CD14-positive monocyte (primary cell): ENCODE measurements at regions of chr19 and their contacts with region 1.

Region 1: GRCh38 chr19:7748770-7749209 is 1.5 kb upstream of the CD209 start:
- DNase-seq: peak in 2 of 3 donors; percentile 40 to 48
- H3K4me3 ChIP-seq: no peak overlapping the region
- H3K4me3 Mint-ChIP-seq: no peak overlapping the region
- H3K27ac ChIP-seq: no peak overlapping the region
- H3K27ac Mint-ChIP-seq: peak overlapping the region in 1 of 7 donors; percentile 22
- H3K4me1 ChIP-seq: peaks cover 20 to 29% of the 10 kb centered on the region in 2 donors
- H3K4me1 Mint-ChIP-seq: peaks cover 36% of the 10 kb centered on the region
- H3K27me3 ChIP-seq: no peaks in the 10 kb centered on the region
- H3K27me3 Mint-ChIP-seq: peaks cover 2 to 6% (median 6%) of the 10 kb centered on the region in 3 donors
- CTCF ChIP-seq: peak; percentile 25

Region 2: GRCh38 chr19:7705387-7706187 is 43.2 kb before region 1 on chr19:
- intact Hi-C with region 1: loop called in 1 of 2 experiments (anchors 5 kb)
- DNase-seq: peak; percentile 91 to 95 (median 94)
- H3K4me3 ChIP-seq: peak overlapping the region in 1 of 3 experiments; percentile 67
- H3K4me3 Mint-ChIP-seq: peak overlapping the region; percentile 70 to 85
- H3K27ac ChIP-seq: peak overlapping the region; percentile 92 to 98
- H3K27ac Mint-ChIP-seq: peak overlapping the region; percentile 98 to 100 (median 99)
- H3K4me1 ChIP-seq: peaks cover 84 to 88% of the 10 kb centered on the region in 2 donors
- H3K4me1 Mint-ChIP-seq: peaks cover 79% of the 10 kb centered on the region
- H3K27me3 ChIP-seq: no peaks in the 10 kb centered on the region
- H3K27me3 Mint-ChIP-seq: peaks cover 0 to 6% (median 4%) of the 10 kb centered on the region in 3 donors
- CTCF ChIP-seq: no peak

Region 3: DNA sequence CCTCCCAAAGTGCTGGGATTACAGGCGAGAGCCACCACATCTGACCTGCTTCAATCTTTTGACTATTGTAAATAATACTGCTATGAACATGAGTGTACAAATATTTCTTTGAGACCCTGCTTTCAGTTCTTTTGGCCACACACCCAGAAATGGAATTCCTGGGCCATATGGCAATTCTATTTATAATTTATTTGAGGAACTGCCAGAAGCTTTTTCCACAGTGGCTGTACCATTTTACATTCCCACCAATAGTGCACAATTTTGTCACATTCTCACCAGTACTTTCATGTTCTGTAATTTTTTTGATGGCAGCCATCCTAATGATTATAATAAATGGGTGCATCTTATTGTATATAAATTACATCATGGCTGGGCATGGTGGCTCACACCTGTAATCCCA is 33.1 kb before region 1 on chr19:
- intact Hi-C with region 1: no loop called
- DNase-seq: no peak
- H3K4me3 ChIP-seq: no peak overlapping the region
- H3K4me3 Mint-ChIP-seq: no peak overlapping the region
- H3K27ac ChIP-seq: peak overlapping the region in 1 of 2 donors; percentile 83
- H3K27ac Mint-ChIP-seq: peak overlapping the region; percentile 95 to 99 (median 98)
- H3K4me1 ChIP-seq: peaks cover 45 to 49% of the 10 kb centered on the region in 2 donors
- H3K4me1 Mint-ChIP-seq: peaks cover 40% of the 10 kb centered on the region
- H3K27me3 ChIP-seq: no peaks in the 10 kb centered on the region
- H3K27me3 Mint-ChIP-seq: peaks cover 0 to 4% (median 0%) of the 10 kb centered on the region in 3 donors
- CTCF ChIP-seq: no peak

Region 4: GRCh38 chr19:7783991-7784421 is 35.2 kb after region 1 on chr19:
- intact Hi-C with region 1: loop called in 1 of 2 experiments (anchors 5 kb)
- DNase-seq: peak; percentile 75 to 89 (median 85)
- H3K4me3 ChIP-seq: peak overlapping the region in 1 of 3 experiments; percentile 0
- H3K4me3 Mint-ChIP-seq: peak overlapping the region in 1 of 2 donors; percentile 70
- H3K27ac ChIP-seq: peak overlapping the region; percentile 2 to 19
- H3K27ac Mint-ChIP-seq: peak overlapping the region; percentile 69 to 92 (median 75)
- H3K4me1 ChIP-seq: peaks cover 34 to 44% of the 10 kb centered on the region in 2 donors
- H3K4me1 Mint-ChIP-seq: peaks cover 29% of the 10 kb centered on the region
- H3K27me3 ChIP-seq: peaks cover 9 to 26% of the 10 kb centered on the region in 2 donors
- H3K27me3 Mint-ChIP-seq: peaks cover 19 to 28% (median 20%) of the 10 kb centered on the region in 3 donors
- CTCF ChIP-seq: no peak

Region 5: DNA sequence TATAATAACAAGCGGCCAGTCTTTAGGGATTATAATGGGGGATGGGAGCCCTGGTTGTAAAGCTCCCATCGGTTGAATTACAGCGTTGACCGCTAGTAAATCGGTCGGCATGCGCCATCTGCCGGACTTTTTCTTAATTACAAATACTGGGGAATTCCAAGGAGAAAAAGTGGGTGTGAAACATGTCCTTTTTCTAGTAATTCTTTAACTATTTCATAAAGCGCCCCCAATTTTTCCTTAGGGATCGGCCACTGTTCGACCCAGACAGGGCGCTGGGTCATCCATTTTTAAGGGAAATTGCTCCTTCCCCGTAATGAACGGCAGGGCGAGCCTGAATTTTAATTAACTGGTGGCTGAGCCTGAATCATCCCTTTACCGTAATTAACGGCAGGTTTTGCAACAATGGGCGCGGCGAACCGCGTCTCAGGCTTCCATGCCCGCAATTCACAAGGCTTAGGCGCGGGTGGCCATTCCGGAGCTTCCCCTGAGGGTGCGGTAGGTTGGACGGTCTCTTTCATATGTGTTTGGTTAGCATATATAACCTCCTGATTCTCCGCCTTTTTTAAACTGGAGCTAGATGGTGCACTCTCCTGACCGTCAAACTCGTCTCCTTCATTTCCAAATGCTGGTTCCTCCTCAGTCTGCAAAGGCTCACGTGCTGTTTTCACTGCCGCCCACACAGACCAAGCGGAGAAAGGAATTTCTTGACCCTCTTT is 51.0 kb after region 1 on chr19:
- intact Hi-C with region 1: loop called in 1 of 2 experiments (anchors 5 kb)
- DNase-seq: peak; percentile 72 to 84 (median 77)
- H3K4me3 ChIP-seq: peak overlapping the region; percentile 31 to 70 (median 35)
- H3K4me3 Mint-ChIP-seq: peak overlapping the region; percentile 75 to 86
- H3K27ac ChIP-seq: peak overlapping the region; percentile 67 to 75
- H3K27ac Mint-ChIP-seq: peak overlapping the region; percentile 82 to 93 (median 91)
- H3K4me1 ChIP-seq: peaks cover 14 to 18% of the 10 kb centered on the region in 2 donors
- H3K4me1 Mint-ChIP-seq: peaks cover 12% of the 10 kb centered on the region
- H3K27me3 ChIP-seq: no peaks in the 10 kb centered on the region
- H3K27me3 Mint-ChIP-seq: peaks cover 0 to 8% (median 4%) of the 10 kb centered on the region in 3 donors
- CTCF ChIP-seq: peak; percentile 86